Right ventricle myocardium superior (tissue), 1 donor: ENCODE measurements at regions of chr7 and their contacts with region 1.

Region 1: GRCh38 chr7:107725151-107725740 is 18.7 kb upstream of the CBLL1 start:
- DNase-seq: no peak
- ATAC-seq: no peak

Region 2: GRCh38 chr7:107194049-107194448 is 531.2 kb before region 1 on chr7:
- intact Hi-C with region 1: loop called (anchors 10 kb)
- DNase-seq: no peak
- ATAC-seq: peak; percentile 17

Region 3: DNA sequence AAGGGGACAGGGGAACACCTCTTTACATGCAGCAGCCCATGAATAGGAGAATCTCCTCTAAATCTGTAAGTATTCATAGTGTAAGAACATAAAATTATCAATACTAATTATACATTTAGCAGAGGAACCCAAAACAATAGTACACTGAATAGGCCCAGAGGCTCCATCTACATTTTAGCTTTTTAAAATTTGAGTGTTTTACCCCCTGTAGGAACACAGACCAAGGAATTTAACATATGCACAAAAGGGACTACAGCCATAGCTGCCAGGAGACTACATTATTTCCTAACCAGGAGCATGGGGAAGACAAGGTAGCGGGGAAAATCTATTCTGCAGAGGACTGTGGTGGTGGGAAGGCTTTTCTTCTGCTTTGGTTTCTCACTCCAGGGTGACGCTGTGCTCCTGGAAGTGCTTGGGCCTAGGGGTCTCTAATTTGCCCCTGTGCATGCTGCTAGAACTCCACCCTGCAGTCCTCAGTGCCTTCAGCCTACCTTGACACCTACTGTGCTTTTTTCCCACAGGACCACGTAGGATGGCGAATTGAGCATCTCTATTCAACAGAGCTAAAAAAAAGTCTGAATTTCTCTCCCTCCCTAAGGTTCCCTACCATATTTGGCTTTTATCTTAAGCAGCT is 261.7 kb before region 1 on chr7:
- intact Hi-C with region 1: loop called (anchors 2 kb)
- DNase-seq: no peak
- ATAC-seq: no peak

Region 4: GRCh38 chr7:107563775-107564552 is 161.3 kb before region 1 on chr7 and contains the starts of genes COG5 and DUS4L:
- intact Hi-C with region 1: loop called (anchors 10 kb)
- DNase-seq: peak; percentile 90
- ATAC-seq: peak; percentile 98
- total RNA-seq, gene COG5: 49.2 TPM
- total RNA-seq, gene DUS4L: 9.4 TPM